OCI-LY7 (cell line): ENCODE measurements at regions of chr13 and their contacts with region 1.

Region 1: GRCh38 chr13:41465241-41465847 is 8.0 kb downstream of the RGCC start:
- DNase-seq: peak; percentile 94
- H3K4me3 ChIP-seq: peak overlapping the region; percentile 85
- H3K27ac ChIP-seq: peak overlapping the region; percentile 95
- H3K4me1 ChIP-seq: peaks cover 71% of the 10 kb centered on the region
- CTCF ChIP-seq: no peak

Region 2: GRCh38 chr13:41492404-41493260 is 27.3 kb after region 1 on chr13:
- CTCF ChIA-PET with region 1: interaction called, 5 read pairs
- POLR2A ChIA-PET with region 1: interaction called, 82 read pairs
- intact Hi-C with region 1: no loop called
- DNase-seq: peak; percentile 78
- H3K4me3 ChIP-seq: peak overlapping the region; percentile 35
- H3K27ac ChIP-seq: peak overlapping the region; percentile 88
- H3K4me1 ChIP-seq: peaks cover 79% of the 10 kb centered on the region
- CTCF ChIP-seq: no peak

Region 3: GRCh38 chr13:41605319-41606285 is 140.3 kb after region 1 on chr13:
- CTCF ChIA-PET with region 1: no interaction called
- POLR2A ChIA-PET with region 1: no interaction called
- intact Hi-C with region 1: no loop called
- DNase-seq: no peak
- H3K4me3 ChIP-seq: no peak overlapping the region
- H3K27ac ChIP-seq: no peak overlapping the region
- H3K4me1 ChIP-seq: no peaks in the 10 kb centered on the region
- CTCF ChIP-seq: no peak